ENCODE measurements at regions of chr3 and their contacts with region 1.

Region 1: DNA sequence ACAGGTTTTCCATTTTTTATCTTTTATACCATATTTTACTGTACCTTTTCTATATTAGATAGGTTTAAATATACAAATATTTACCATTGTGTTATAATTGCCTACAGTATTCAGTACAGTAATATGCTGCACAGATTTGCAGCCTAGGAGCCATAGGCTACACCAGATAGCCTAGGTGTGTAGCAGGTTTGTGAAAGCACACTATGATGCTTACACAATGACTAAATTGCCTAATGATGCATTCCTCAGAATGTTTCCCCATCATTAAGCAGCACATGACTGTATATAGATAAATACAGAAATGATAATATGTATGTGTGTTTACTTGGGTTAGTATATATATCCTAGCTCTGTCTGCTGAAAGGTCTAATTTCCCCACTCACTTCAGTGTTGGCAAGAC is 65.8 kb downstream of the MYL3 start:
- DNase-seq: no peak
- ATAC-seq: no peak
- H3K4me3 ChIP-seq: no peak overlapping the region
- H3K4me3 Mint-ChIP-seq: no peak overlapping the region
- H3K27ac ChIP-seq: no peak overlapping the region
- H3K27ac Mint-ChIP-seq: no peak overlapping the region
- H3K4me1 ChIP-seq: no peaks in the 10 kb centered on the region
- H3K4me1 Mint-ChIP-seq: no peaks in the 10 kb centered on the region
- H3K27me3 ChIP-seq: no peaks in the 10 kb centered on the region
- H3K27me3 Mint-ChIP-seq: peaks cover 35% of the 10 kb centered on the region
- CTCF ChIP-seq: no peak

Region 2: DNA sequence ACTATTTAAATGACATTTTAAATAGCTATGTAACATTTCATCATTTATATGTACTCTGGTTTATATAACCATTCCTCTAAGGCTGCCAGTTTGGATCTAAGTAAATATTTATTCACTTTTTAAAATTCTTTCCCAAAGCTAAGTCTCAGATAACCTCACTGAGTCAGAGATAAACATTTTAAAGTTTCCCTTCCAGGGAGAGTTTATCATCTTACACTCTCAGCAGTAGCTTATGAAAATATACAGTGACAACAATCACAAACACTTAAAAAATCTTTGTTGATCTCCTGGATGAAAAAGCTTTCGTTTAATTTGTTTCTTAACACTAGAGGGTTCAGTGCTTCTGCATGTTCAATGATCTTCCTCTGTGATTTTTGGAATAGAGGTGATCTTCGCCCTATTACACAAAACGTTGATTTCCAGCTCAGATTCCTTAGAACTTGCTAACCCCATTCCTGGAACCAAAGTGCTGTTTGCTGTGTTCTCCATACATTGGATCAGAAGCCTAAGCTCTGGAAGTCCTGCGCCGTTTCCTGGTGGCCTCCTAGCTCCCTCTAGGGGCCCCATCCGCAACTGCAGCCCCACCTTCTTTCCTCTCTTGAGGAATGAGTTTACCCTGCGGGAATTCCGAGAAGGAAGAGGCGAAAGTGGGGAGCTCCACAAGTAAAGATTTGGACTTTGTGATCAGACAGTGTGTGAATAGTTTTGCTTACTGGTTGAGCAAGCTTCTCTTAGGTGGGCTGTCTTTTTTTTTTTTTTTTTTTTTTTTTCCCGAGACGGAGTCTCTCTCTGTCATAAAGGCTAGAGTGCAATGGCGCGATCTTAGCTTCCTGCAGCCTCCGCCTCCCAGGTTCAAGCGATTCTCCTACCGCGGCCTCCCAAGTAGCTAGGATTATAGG is 1137.5 kb before region 1 on chr3:
- CTCF ChIA-PET with region 1: no interaction called
- POLR2A ChIA-PET with region 1: no interaction called
- intact Hi-C with region 1: no loop called
- DNase-seq: peak in 8 of 9 experiments; percentile 24 to 67 (median 51)
- ATAC-seq: no peak
- H3K4me3 ChIP-seq: no peak overlapping the region
- H3K4me3 Mint-ChIP-seq: no peak overlapping the region
- H3K27ac ChIP-seq: no peak overlapping the region
- H3K27ac Mint-ChIP-seq: peak overlapping the region; percentile 9
- H3K4me1 ChIP-seq: peaks cover 8% of the 10 kb centered on the region
- H3K4me1 Mint-ChIP-seq: peaks cover 18% of the 10 kb centered on the region
- H3K27me3 ChIP-seq: no peaks in the 10 kb centered on the region
- H3K27me3 Mint-ChIP-seq: no peaks in the 10 kb centered on the region
- CTCF ChIP-seq: peak; percentile 84

Region 3: GRCh38 chr3:46866720-46867549 is 69.5 kb after region 1 on chr3:
- CTCF ChIA-PET with region 1: no interaction called
- POLR2A ChIA-PET with region 1: no interaction called
- intact Hi-C with region 1: no loop called
- DNase-seq: peak; percentile 57 to 93 (median 79)
- ATAC-seq: peak; percentile 80
- H3K4me3 ChIP-seq: no peak overlapping the region
- H3K4me3 Mint-ChIP-seq: no peak overlapping the region
- H3K27ac ChIP-seq: no peak overlapping the region
- H3K27ac Mint-ChIP-seq: no peak overlapping the region
- H3K4me1 ChIP-seq: no peaks in the 10 kb centered on the region
- H3K4me1 Mint-ChIP-seq: no peaks in the 10 kb centered on the region
- H3K27me3 ChIP-seq: no peaks in the 10 kb centered on the region
- H3K27me3 Mint-ChIP-seq: no peaks in the 10 kb centered on the region
- CTCF ChIP-seq: peak; percentile 75

Region 4: DNA sequence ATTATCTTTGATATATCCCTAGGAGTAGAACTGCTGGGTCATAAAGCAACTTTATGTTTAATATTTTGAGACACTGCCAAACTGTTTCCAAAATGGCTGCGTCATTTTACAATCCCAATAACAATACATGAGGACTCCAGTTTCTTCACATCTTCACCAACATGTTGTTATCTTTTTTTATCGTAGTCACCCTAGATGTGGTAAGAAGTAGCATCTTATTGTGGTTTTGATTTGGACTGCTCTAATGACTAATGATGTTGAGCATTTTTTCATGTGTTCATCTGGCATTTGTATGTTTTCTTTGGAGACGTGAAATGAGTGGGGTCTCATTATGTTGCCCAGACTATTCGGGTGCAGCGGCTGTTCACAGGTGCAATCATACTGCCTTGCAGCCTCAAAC is 1135.0 kb after region 1 on chr3:
- CTCF ChIA-PET with region 1: no interaction called
- POLR2A ChIA-PET with region 1: no interaction called
- intact Hi-C with region 1: loop called in 1 of 2 experiments (anchors 5 kb)
- DNase-seq: no peak
- ATAC-seq: no peak
- H3K4me3 ChIP-seq: no peak overlapping the region
- H3K4me3 Mint-ChIP-seq: no peak overlapping the region
- H3K27ac ChIP-seq: no peak overlapping the region
- H3K27ac Mint-ChIP-seq: no peak overlapping the region
- H3K4me1 ChIP-seq: no peaks in the 10 kb centered on the region
- H3K4me1 Mint-ChIP-seq: no peaks in the 10 kb centered on the region
- H3K27me3 ChIP-seq: no peaks in the 10 kb centered on the region
- H3K27me3 Mint-ChIP-seq: no peaks in the 10 kb centered on the region
- CTCF ChIP-seq: no peak

Measured in CD8-positive, alpha-beta T cell (primary cell).